Heart right ventricle (tissue), 16 donors: ENCODE measurements at regions of chr1 and their contacts with region 1.

Region 1: DNA sequence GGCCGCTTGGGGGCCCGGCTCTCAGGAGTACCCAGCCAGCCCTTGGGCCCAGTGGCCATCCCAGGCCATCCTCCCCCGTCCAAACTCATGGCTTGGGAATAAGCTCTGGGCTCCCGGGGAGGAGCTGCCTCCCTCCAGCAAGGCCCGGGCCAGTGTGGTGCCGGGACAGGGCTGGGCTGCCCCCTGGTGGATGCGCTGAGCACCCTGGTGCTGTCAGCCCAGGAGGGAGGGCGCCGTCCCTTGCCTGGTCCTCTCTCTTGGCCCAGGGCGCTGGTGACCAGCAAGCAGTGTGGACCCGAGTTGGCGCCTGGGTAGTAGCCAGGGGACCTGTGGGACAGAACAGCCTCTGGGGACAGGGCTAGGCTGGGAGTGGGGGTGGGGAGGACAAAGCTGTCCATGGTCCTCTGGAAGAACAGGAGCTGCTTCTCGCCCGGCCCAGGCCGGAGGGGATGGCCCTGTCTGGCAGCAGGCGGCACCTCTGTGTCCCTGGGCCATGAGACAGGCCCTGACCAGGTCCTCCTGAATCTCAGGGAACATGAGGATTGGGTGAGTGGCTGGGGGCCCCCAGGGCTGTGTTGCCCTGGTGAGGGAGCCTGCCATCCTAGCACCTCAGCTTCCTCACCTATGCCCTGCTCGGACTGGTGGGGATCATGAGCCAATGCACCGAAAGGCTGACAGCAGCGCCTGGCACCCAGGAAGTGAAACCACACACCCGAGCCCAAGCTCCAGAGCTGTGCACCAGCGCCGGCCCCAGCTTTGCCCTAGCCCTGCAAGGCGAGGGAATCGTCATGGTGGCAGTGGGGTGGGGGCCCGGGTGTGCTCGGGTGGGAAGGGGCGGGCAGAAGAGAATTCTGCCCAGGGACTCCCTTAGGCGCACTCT is 9.4 kb downstream of the MORN1 start:
- DNase-seq: peak; percentile 84 to 90
- ATAC-seq: peak; percentile 92 to 98 (median 96)
- H3K4me3 ChIP-seq: peak overlapping the region in 1 of 10 donors; percentile 2
- H3K27ac ChIP-seq: no peak overlapping the region
- H3K4me1 ChIP-seq: peaks cover 4 to 14% (median 12%) of the 10 kb centered on the region in 9 donors
- H3K27me3 ChIP-seq: no peaks in the 10 kb centered on the region
- CTCF ChIP-seq: peak; percentile 80 to 98 (median 94)

Region 2: GRCh38 chr1:2133039-2133878 is 248.7 kb before region 1 on chr1:
- intact Hi-C with region 1: loop called in 3 of 10 experiments (anchors 5 kb)
- DNase-seq: peak; percentile 98 to 99
- ATAC-seq: peak; percentile 92 to 95 (median 94)
- H3K4me3 ChIP-seq: peak overlapping the region in 9 of 10 donors; percentile 21 to 60 (median 46)
- H3K27ac ChIP-seq: peak overlapping the region; percentile 52 to 96 (median 88)
- H3K4me1 ChIP-seq: peaks cover 8 to 44% (median 25%) of the 10 kb centered on the region in 9 donors
- H3K27me3 ChIP-seq: no peaks in the 10 kb centered on the region
- CTCF ChIP-seq: no peak

Region 3: GRCh38 chr1:2194898-2195673 is 186.9 kb before region 1 on chr1:
- intact Hi-C with region 1: loop called (anchors 1 to 2 kb)
- DNase-seq: peak; percentile 92
- ATAC-seq: peak; percentile 77 to 86 (median 82)
- H3K4me3 ChIP-seq: peak overlapping the region; percentile 47 to 78 (median 70)
- H3K27ac ChIP-seq: peak overlapping the region; percentile 90 to 98 (median 94)
- H3K4me1 ChIP-seq: peaks cover 36 to 71% (median 65%) of the 10 kb centered on the region in 9 donors
- H3K27me3 ChIP-seq: no peaks in the 10 kb centered on the region
- CTCF ChIP-seq: peak; percentile 91 to 98 (median 95)

Region 4: GRCh38 chr1:2275796-2276536 is 106.0 kb before region 1 on chr1:
- intact Hi-C with region 1: no loop called
- DNase-seq: peak in 1 of 2 donors; percentile 40
- ATAC-seq: peak in 3 of 8 donors; percentile 11 to 46 (median 33)
- H3K4me3 ChIP-seq: no peak overlapping the region
- H3K27ac ChIP-seq: peak overlapping the region in 9 of 10 donors; percentile 1 to 80 (median 67)
- H3K4me1 ChIP-seq: peaks cover 72 to 93% (median 91%) of the 10 kb centered on the region in 9 donors
- H3K27me3 ChIP-seq: no peaks in the 10 kb centered on the region
- CTCF ChIP-seq: no peak

Region 5: DNA sequence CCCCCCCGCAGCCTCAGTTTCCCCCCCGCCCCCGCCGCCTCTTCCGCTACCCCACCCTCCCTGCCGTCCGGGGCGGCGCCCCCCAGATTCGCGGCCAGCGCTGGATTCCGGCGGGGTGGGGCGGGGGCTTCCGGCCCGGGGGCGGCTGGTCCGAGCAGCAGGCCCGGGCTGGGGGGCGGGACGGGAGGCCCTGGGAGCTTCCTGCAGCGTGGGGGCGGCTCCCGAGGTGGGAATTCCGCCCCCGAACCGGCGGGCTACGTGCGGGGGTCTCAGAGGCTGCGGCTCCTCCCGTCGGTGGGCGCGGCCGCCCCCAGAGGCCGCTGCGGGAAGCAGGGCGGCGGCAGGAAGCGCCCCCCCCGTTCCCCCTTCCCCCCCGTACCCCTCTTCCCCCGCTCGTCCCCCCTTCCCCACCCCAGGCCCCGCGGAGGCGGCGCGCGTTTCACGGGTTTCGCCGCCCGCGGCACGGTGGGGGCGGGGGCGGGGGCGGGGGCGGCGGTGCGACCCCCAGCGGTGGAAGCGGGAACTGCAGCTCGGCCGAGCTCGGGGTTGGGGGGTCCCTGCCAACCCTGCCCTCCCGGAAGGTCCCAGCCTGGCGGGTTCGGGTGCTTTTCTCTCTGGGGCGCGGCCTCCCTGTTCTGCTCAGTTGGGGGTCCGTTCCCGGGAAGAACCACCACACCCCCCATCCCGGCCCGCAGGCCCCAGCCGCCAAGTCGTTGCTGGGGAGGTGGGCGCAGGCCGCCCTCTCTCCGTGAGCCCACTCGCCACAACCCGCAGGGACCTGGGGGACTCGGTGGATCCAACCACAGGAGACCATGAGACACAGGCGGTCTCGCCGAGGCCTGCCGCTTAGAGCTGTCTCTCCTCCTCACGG is 66.9 kb before region 1 on chr1:
- intact Hi-C with region 1: loop called in 4 of 10 experiments (anchors 5 to 10 kb)
- DNase-seq: peak; percentile 74
- ATAC-seq: peak; percentile 9 to 61 (median 34)
- H3K4me3 ChIP-seq: peak overlapping the region; percentile 45 to 80 (median 68)
- H3K27ac ChIP-seq: peak overlapping the region; percentile 82 to 96 (median 91)
- H3K4me1 ChIP-seq: peaks cover 40 to 100% (median 68%) of the 10 kb centered on the region in 9 donors
- H3K27me3 ChIP-seq: peaks cover 0 to 20% (median 0%) of the 10 kb centered on the region in 7 donors
- CTCF ChIP-seq: peak; percentile 92 to 99 (median 97)

Region 6: GRCh38 chr1:2322065-2322571 is 59.9 kb before region 1 on chr1:
- intact Hi-C with region 1: loop called in 4 of 10 experiments (anchors 5 to 10 kb)
- DNase-seq: peak; percentile 79 to 81
- ATAC-seq: peak; percentile 57 to 83 (median 78)
- H3K4me3 ChIP-seq: peak overlapping the region in 7 of 10 donors; percentile 4 to 42 (median 23)
- H3K27ac ChIP-seq: peak overlapping the region; percentile 40 to 82 (median 66)
- H3K4me1 ChIP-seq: peaks cover 16 to 61% (median 37%) of the 10 kb centered on the region in 9 donors
- H3K27me3 ChIP-seq: peaks cover 0 to 25% (median 0%) of the 10 kb centered on the region in 7 donors
- CTCF ChIP-seq: peak in 3 of 9 donors; percentile 8 to 29 (median 29)

Region 7: GRCh38 chr1:2330511-2331199 is 51.3 kb before region 1 on chr1:
- intact Hi-C with region 1: loop called in 2 of 10 experiments (anchors 5 to 10 kb)
- DNase-seq: no peak
- ATAC-seq: peak; percentile 38 to 82 (median 72)
- H3K4me3 ChIP-seq: no peak overlapping the region
- H3K27ac ChIP-seq: peak overlapping the region in 6 of 10 donors; percentile 18 to 49 (median 35)
- H3K4me1 ChIP-seq: peaks cover 8 to 18% (median 10%) of the 10 kb centered on the region in 9 donors
- H3K27me3 ChIP-seq: no peaks in the 10 kb centered on the region
- CTCF ChIP-seq: peak in 2 of 9 donors; percentile 6 to 17

Region 8: DNA sequence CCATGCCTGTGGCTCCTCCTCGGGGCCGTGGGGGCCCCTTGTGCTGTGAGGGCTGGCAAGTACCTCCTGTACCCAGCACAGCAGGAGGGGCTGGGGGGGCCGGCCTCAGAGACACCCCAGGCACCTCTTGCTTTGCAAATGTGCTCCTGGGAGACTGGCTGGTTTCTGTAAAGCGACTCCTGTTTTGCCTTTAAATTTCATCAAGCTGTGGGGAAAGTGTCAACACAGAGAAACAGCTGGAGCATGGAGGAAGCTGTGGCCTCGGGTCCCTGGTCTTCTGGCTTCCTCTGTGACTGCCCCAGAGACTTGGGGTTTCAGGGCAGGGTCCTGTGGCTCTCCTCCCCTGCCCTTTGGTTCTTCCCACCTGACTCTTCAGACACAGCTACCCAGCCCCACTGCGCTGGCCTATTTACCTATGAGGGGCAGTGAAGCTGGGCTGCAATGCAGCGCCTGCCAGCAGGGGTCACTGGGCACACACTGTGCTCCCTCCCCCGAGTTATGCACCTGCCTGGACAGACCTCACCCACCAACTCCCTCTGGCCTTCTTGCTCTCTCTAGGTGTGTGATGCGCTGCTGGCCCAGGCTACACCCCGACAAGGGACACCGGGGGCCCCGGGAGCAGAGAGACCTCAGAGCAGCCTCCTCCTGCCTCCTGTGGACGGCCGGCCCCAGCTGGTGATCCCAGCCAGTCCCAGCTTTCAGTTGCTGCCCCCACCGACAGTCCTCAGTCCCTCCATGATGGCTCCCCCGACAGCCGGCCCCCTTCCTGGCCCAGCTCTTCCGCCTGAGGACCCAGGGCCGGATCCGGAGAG is 48.0 kb after region 1 on chr1:
- intact Hi-C with region 1: no loop called
- DNase-seq: no peak
- ATAC-seq: no peak
- H3K4me3 ChIP-seq: no peak overlapping the region
- H3K27ac ChIP-seq: no peak overlapping the region
- H3K4me1 ChIP-seq: no peaks in the 10 kb centered on the region
- H3K27me3 ChIP-seq: peaks cover 4 to 85% (median 72%) of the 10 kb centered on the region in 7 donors
- CTCF ChIP-seq: peak in 1 of 9 donors; percentile 31